ENCODE measurements at regions of chr3 and their contacts with region 1.

Region 1: GRCh38 chr3:138915503-138916498 is 31.1 kb downstream of the FOXL2 start:
- DNase-seq: peak; percentile 89
- H3K4me3 Mint-ChIP-seq: peak overlapping the region; percentile 81
- H3K27ac Mint-ChIP-seq: peak overlapping the region; percentile 24
- H3K4me1 Mint-ChIP-seq: peaks cover 4% of the 10 kb centered on the region
- H3K27me3 Mint-ChIP-seq: no peaks in the 10 kb centered on the region

Region 2: GRCh38 chr3:138329127-138329983 is 586.4 kb before region 1 on chr3 and contains the start of gene NME9:
- CTCF ChIA-PET with region 1: interaction called, 4 read pairs
- intact Hi-C with region 1: loop called (anchors 5 kb)
- DNase-seq: peak; percentile 92
- H3K4me3 Mint-ChIP-seq: peak within 1 kb of the TSS; percentile 91
- H3K27ac Mint-ChIP-seq: peak within 1 kb of the TSS; percentile 86
- H3K4me1 Mint-ChIP-seq: peaks cover 47% of the 10 kb centered on the region
- H3K27me3 Mint-ChIP-seq: no peaks in the 10 kb centered on the region
- total RNA-seq, gene NME9: 2.0 to 2.4 TPM

Region 3: GRCh38 chr3:138578141-138578540 is 337.7 kb before region 1 on chr3:
- CTCF ChIA-PET with region 1: interaction called, 14 read pairs
- intact Hi-C with region 1: no loop called
- DNase-seq: no peak
- H3K4me3 Mint-ChIP-seq: no peak overlapping the region
- H3K27ac Mint-ChIP-seq: no peak overlapping the region
- H3K4me1 Mint-ChIP-seq: peaks cover 25% of the 10 kb centered on the region
- H3K27me3 Mint-ChIP-seq: no peaks in the 10 kb centered on the region

Region 4: DNA sequence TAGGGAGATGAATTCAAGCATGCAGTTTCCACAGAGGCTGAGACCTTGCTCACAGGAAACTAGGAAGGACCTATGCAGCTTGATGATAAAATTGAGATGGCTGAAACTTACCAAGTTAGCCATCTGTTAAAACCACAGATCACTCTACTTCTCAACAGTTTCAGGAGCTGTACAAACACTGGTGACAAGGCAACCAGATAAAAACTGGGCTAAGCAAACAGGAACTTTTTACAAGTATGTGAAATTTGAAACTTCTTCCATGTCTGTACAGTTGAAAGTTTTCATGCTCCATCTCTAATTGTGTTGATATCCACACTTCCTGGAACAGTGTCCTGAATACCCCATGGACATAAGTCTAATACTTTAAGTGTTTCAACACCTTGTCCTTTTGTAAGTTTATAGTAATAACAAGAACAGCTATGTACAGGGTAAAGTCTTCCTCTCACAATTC is 229.0 kb before region 1 on chr3:
- CTCF ChIA-PET with region 1: interaction called, 47 read pairs
- intact Hi-C with region 1: loop called (anchors 1 kb)
- DNase-seq: no peak
- H3K4me3 Mint-ChIP-seq: no peak overlapping the region
- H3K27ac Mint-ChIP-seq: peak overlapping the region; percentile 61
- H3K4me1 Mint-ChIP-seq: peaks cover 15% of the 10 kb centered on the region
- H3K27me3 Mint-ChIP-seq: no peaks in the 10 kb centered on the region

Region 5: GRCh38 chr3:138781012-138781470 is 134.8 kb before region 1 on chr3:
- CTCF ChIA-PET with region 1: interaction called, 12 read pairs
- intact Hi-C with region 1: no loop called
- DNase-seq: peak; percentile 35
- H3K4me3 Mint-ChIP-seq: no peak overlapping the region
- H3K27ac Mint-ChIP-seq: no peak overlapping the region
- H3K4me1 Mint-ChIP-seq: peaks cover 34% of the 10 kb centered on the region
- H3K27me3 Mint-ChIP-seq: no peaks in the 10 kb centered on the region

Region 6: DNA sequence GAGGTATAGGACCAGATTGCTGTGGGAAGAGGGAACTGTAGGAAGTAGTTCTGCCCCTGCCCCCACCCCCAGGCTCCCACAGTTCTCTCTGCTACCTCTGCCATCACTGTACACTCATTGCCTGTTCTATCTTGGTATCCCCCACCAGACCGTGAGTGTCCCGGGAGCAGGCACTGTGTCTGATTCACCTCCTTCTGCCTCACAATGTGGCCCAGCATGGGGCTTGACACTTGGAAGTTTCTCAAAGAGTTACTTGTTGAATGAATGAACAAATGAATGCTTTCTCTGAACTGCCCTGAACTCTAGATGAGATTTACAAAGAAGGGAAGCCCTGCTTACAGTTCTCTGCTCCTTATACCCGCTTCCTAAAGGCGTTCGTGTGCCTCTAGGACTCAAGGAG is 54.0 kb before region 1 on chr3:
- CTCF ChIA-PET with region 1: interaction called, 13 read pairs
- intact Hi-C with region 1: no loop called
- DNase-seq: no peak
- H3K4me3 Mint-ChIP-seq: no peak overlapping the region
- H3K27ac Mint-ChIP-seq: no peak overlapping the region
- H3K4me1 Mint-ChIP-seq: peaks cover 5% of the 10 kb centered on the region
- H3K27me3 Mint-ChIP-seq: no peaks in the 10 kb centered on the region

Region 7: DNA sequence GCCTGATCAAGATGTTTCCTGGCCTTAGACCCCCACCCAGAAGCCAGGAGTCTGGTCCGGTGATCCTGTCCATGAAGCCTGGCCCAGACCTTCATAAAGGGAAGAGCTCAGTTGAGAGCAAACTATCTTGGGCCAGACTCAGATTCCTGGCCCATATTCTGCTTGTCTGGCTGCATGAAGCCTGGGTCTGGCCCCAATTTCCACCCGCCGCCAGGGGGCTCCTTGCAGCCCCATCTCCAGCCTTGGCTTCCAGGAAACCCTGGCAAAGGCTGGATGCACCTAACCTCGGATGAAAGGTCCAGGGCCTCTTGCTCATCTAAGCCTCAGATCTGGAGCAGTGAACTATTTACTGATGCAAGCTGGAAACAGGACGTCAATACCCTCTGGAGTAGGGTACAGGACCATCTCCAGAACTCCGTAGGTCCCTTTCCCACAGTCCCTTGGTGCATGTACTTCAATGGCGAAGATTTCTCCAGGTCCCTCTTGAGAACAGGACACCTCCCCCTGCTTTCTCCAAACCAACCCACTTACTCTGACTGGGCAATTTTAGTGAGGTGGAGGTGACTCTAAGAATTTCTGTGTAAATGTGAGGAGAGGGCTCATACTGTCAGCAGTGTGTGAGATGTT is 25.6 kb after region 1 on chr3:
- CTCF ChIA-PET with region 1: interaction called, 113 read pairs
- intact Hi-C with region 1: no loop called
- DNase-seq: peak; percentile 44
- H3K4me3 Mint-ChIP-seq: no peak overlapping the region
- H3K27ac Mint-ChIP-seq: no peak overlapping the region
- H3K4me1 Mint-ChIP-seq: peaks cover 45% of the 10 kb centered on the region
- H3K27me3 Mint-ChIP-seq: peaks cover 87% of the 10 kb centered on the region

Region 8: GRCh38 chr3:139288266-139288821 is 372.5 kb after region 1 on chr3:
- CTCF ChIA-PET with region 1: no interaction called
- intact Hi-C with region 1: no loop called
- DNase-seq: no peak
- H3K4me3 Mint-ChIP-seq: no peak overlapping the region
- H3K27ac Mint-ChIP-seq: no peak overlapping the region
- H3K4me1 Mint-ChIP-seq: no peaks in the 10 kb centered on the region
- H3K27me3 Mint-ChIP-seq: no peaks in the 10 kb centered on the region

Measured in activated naive CD4-positive, alpha-beta T cell treated with anti-CD3 and anti-CD28 coated beads for 36 hours (primary cell).